ENCODE measurements at regions of chr5 and their contacts with region 1.

Region 1: DNA sequence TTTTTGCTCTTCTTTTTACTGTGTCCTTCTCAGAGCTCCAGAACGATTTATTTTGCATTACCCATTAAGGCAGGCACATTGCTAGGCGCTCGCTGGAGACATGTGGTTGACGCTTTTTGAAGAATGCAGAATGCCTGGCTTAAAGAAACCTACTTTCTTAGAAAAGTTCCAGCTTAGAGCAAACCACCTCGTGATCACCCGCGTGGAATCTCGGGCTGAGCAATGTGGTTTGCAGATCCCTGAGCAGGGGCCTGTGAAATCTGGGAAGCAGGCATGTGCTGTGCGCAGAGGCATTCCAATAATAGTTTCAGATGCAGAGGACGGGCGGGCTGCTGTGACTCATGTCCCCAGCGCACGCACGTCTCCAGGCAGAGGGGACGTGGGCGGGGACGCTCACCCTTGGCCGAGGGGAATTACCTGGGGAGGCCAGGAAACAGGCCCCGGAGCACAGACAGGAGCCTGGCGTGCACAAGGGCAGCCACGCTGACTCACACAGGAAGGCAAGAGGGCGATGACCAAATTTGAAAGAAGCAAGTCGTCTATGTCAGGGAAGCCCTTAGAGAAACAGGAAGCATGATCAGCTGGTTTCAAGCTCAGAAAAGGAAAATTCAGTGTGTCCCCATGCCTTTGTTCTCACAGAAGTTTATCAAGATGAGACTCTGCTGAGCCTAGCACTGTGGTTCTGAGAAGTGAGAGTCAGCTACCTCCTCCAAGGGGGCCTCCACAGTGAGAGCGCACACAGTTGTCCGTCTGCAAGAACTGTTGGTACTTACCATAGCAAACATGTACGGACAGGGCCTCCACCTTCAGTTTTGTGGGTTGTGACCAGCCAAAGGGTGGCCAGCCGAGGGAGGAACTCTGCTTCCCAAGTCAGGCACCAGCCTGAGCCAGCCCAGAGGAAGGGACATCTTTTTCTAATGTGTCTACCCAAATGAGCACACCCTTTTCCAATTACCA is 218.6 kb downstream of the PIK3R1 start:
- DNase-seq: peak; percentile 78
- ATAC-seq: peak; percentile 97
- H3K4me3 Mint-ChIP-seq: peak overlapping the region; percentile 71
- H3K27ac Mint-ChIP-seq: peak overlapping the region; percentile 85
- H3K4me1 Mint-ChIP-seq: peaks cover 39% of the 10 kb centered on the region
- H3K27me3 Mint-ChIP-seq: no peaks in the 10 kb centered on the region
- CTCF ChIP-seq: no peak

Region 2: DNA sequence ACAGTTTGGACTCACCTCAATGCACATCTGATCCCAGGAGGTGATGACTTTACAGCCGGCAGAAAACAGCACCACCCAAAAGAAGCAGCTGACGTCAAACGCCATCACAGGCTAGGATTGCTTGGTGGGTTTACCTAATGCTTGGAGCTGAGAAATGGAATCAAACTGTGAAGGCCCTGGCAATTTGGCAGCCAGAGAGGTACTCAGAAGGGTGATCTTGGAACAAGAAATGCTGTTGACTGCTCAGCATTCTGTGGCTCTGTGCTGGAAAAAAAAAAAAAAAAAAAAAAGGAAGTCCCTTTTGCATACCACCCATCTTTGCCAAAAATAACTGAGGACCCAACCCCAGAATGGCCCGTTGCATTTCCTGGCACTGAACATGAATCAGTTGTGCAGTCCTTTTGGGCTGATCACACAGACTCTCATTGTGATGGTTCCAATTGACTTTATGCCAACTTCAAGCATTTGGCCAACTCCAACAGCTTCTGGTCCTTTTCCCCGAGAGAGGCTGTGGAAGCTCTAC is 1237.6 kb before region 1 on chr5 and contains the start of gene CD180:
- CTCF ChIA-PET with region 1: no interaction called
- POLR2A ChIA-PET with region 1: no interaction called
- intact Hi-C with region 1: loop called (anchors 10 kb)
- DNase-seq: no peak
- ATAC-seq: peak; percentile 32
- H3K4me3 Mint-ChIP-seq: peak within 1 kb of the TSS; percentile 91
- H3K27ac Mint-ChIP-seq: peak within 1 kb of the TSS; percentile 98
- H3K4me1 Mint-ChIP-seq: peaks cover 97% of the 10 kb centered on the region
- H3K27me3 Mint-ChIP-seq: no peaks in the 10 kb centered on the region
- CTCF ChIP-seq: no peak
- total RNA-seq, gene CD180: 32.6 and 35.7 TPM in 2 replicates

Region 3: DNA sequence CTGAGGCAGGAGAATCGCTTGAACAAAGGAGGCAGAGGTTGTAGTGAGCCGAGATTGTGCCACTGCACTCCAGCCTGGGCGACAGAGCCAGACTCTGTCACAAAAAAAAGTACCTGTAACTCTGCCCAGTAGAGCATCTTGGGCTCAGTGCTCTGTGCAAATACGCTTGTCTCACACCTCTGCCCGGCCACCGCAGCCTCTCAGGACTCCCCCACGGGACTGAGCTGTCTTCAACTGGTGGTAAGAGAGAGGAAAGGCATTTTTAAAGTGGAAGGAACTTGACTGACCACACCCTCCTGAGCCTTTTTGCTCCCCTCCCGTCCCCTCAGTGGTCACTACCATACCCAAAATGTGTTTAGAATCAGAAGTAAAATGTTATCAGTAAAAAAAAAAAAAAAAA is 392.9 kb before region 1 on chr5:
- CTCF ChIA-PET with region 1: no interaction called
- POLR2A ChIA-PET with region 1: no interaction called
- intact Hi-C with region 1: loop called (anchors 1 kb)
- DNase-seq: no peak
- ATAC-seq: peak; percentile 87
- H3K4me3 Mint-ChIP-seq: peak overlapping the region; percentile 67
- H3K27ac Mint-ChIP-seq: peak overlapping the region; percentile 80
- H3K4me1 Mint-ChIP-seq: peaks cover 31% of the 10 kb centered on the region
- H3K27me3 Mint-ChIP-seq: no peaks in the 10 kb centered on the region
- CTCF ChIP-seq: no peak

Region 4: GRCh38 chr5:68200288-68200687 is 233.9 kb before region 1 on chr5:
- CTCF ChIA-PET with region 1: no interaction called
- POLR2A ChIA-PET with region 1: no interaction called
- intact Hi-C with region 1: no loop called
- DNase-seq: no peak
- ATAC-seq: no peak
- H3K4me3 Mint-ChIP-seq: no peak overlapping the region
- H3K27ac Mint-ChIP-seq: no peak overlapping the region
- H3K4me1 Mint-ChIP-seq: peaks cover 23% of the 10 kb centered on the region
- H3K27me3 Mint-ChIP-seq: no peaks in the 10 kb centered on the region
- CTCF ChIP-seq: no peak

Region 5: GRCh38 chr5:68261569-68262065 is 172.6 kb before region 1 on chr5:
- CTCF ChIA-PET with region 1: no interaction called
- POLR2A ChIA-PET with region 1: no interaction called
- intact Hi-C with region 1: no loop called
- DNase-seq: no peak
- ATAC-seq: no peak
- H3K4me3 Mint-ChIP-seq: no peak overlapping the region
- H3K27ac Mint-ChIP-seq: peak overlapping the region; percentile 75
- H3K4me1 Mint-ChIP-seq: peaks cover 72% of the 10 kb centered on the region
- H3K27me3 Mint-ChIP-seq: no peaks in the 10 kb centered on the region
- CTCF ChIP-seq: no peak

Region 6: DNA sequence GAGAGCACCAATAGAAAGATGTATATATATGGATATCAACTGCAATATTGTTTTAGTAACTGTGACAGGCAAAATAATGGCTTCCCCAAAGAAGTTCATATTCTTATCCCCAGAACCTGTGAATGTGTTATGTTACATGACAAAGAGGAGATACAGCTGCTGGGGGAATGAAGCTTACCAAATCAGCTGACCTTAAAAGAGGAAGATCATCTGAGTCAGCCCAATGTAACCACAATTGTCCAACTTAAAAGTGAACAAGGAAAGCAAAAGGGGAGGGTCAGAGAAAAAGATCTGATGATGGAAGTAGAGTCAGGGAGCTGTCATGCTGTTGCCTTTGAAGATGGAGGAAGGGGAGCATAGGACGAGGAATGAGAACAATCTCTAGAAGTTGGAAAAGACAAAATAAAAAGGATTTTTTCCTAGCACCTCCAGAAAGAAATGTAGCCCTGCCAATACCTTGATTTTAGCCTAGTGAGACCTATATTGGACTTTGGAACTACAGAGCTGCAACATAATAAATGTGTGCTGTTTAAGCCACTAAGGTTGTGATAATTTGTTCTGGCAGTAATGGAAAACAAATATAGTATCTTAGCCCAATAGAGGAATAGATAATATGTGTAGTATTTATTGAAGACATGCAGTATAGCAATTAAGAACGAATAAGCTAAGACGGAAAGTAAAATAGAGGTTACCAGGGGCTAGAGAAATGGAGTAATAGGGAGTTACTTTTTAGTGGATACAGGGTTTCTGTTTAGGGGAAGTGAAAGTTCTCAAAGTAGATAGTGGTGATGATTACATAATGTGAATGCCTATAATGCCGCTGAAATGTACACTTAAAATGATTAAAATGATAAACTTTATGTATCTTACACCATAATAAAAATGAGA is 102.8 kb before region 1 on chr5:
- CTCF ChIA-PET with region 1: no interaction called
- POLR2A ChIA-PET with region 1: no interaction called
- intact Hi-C with region 1: loop called (anchors 1 kb)
- DNase-seq: no peak
- ATAC-seq: peak; percentile 50
- H3K4me3 Mint-ChIP-seq: peak overlapping the region; percentile 1
- H3K27ac Mint-ChIP-seq: peak overlapping the region; percentile 4
- H3K4me1 Mint-ChIP-seq: peaks cover 24% of the 10 kb centered on the region
- H3K27me3 Mint-ChIP-seq: no peaks in the 10 kb centered on the region
- CTCF ChIP-seq: no peak

Region 7: DNA sequence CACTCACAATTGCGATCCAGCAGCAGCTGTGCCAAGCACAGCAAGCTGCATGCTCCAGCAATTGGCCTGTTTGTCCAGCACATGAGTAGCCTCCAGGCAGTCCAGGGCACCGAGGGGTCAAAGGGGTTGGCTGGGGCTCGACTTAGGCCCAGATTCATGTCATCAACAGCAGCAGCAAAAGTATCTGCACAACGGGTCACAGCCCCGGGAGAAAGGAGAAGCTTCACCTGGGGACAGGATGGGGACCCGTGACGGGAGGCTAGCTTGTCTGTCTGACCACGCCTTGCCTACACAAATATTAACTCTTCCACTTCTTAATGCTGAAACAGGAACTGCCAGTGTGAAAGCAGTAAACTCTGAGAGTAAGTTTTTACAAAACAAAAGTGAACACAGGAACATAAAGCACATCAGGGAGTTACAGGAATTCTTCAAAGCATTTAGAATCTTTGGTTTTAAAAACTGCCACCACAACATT is 27.4 kb before region 1 on chr5:
- CTCF ChIA-PET with region 1: no interaction called
- POLR2A ChIA-PET with region 1: interaction called, 3 read pairs
- intact Hi-C with region 1: loop called (anchors 1 kb)
- DNase-seq: no peak
- ATAC-seq: peak; percentile 72
- H3K4me3 Mint-ChIP-seq: no peak overlapping the region
- H3K27ac Mint-ChIP-seq: no peak overlapping the region
- H3K4me1 Mint-ChIP-seq: peaks cover 24% of the 10 kb centered on the region
- H3K27me3 Mint-ChIP-seq: no peaks in the 10 kb centered on the region
- CTCF ChIP-seq: no peak

Region 8: DNA sequence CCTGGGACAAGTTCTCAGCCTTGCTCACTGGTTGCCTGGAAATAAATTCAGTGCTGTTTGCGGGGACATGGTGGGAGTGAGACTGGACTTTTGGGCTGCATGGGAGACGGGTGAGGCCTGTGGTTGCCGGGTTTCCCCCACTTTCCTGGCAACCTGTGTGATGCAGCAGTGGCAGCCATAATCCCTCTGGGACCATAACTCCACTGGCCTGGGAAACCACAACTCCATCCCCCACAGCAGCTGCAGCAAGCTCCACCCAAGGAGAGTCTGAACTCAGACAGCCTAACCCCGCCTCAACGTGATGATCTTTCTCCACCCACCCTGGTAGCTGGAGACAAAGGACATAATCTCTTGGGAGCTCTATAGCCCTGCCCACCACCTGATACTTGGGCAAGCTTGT is 131.2 kb after region 1 on chr5:
- CTCF ChIA-PET with region 1: no interaction called
- POLR2A ChIA-PET with region 1: no interaction called
- intact Hi-C with region 1: loop called (anchors 1 kb)
- DNase-seq: peak; percentile 51
- ATAC-seq: peak; percentile 98
- H3K4me3 Mint-ChIP-seq: peak overlapping the region; percentile 45
- H3K27ac Mint-ChIP-seq: peak overlapping the region; percentile 71
- H3K4me1 Mint-ChIP-seq: peaks cover 22% of the 10 kb centered on the region
- H3K27me3 Mint-ChIP-seq: no peaks in the 10 kb centered on the region
- CTCF ChIP-seq: no peak